ENCODE measurements at regions of chr20 and their contacts with region 1.

Region 1: GRCh38 chr20:63272584-63273579 is at the start of gene ARFGAP1:
- DNase-seq: peak; percentile 73
- H3K4me3 ChIP-seq: peak within 1 kb of the TSS; percentile 91 to 97 (median 93)
- H3K27ac ChIP-seq: peak within 1 kb of the TSS; percentile 74
- H3K4me1 ChIP-seq: peaks cover 28% of the 10 kb centered on the region
- H3K27me3 ChIP-seq: no peaks in the 10 kb centered on the region
- CTCF ChIP-seq: no peak
- total RNA-seq, gene ARFGAP1: 48.5 to 89.8 TPM

Region 2: GRCh38 chr20:63230800-63231268 is 42.0 kb before region 1 on chr20:
- CTCF ChIA-PET with region 1: no interaction called
- dilution Hi-C with region 1: no loop called
- in situ Hi-C with region 1: no loop called
- intact Hi-C with region 1: loop called (anchors 2 kb)
- DNase-seq: peak; percentile 42
- H3K4me3 ChIP-seq: no peak overlapping the region
- H3K27ac ChIP-seq: no peak overlapping the region
- H3K4me1 ChIP-seq: no peaks in the 10 kb centered on the region
- H3K27me3 ChIP-seq: peaks cover 7% of the 10 kb centered on the region
- CTCF ChIP-seq: peak in 1 of 2 donors; percentile 54

Region 3: GRCh38 chr20:63255931-63256704 is 16.8 kb before region 1 on chr20:
- CTCF ChIA-PET with region 1: no interaction called
- dilution Hi-C with region 1: no loop called
- in situ Hi-C with region 1: no loop called
- intact Hi-C with region 1: loop called (anchors 1 kb)
- DNase-seq: peak; percentile 90
- H3K4me3 ChIP-seq: peak overlapping the region in 2 of 3 experiments; percentile 16 to 26
- H3K27ac ChIP-seq: no peak overlapping the region
- H3K4me1 ChIP-seq: peaks cover 27% of the 10 kb centered on the region
- H3K27me3 ChIP-seq: peaks cover 9% of the 10 kb centered on the region
- CTCF ChIP-seq: no peak

Region 4: GRCh38 chr20:63337786-63338420 is 65.0 kb after region 1 on chr20:
- CTCF ChIA-PET with region 1: no interaction called
- dilution Hi-C with region 1: loop called (anchors 5 kb)
- in situ Hi-C with region 1: no loop called
- intact Hi-C with region 1: no loop called
- DNase-seq: no peak
- H3K4me3 ChIP-seq: no peak overlapping the region
- H3K27ac ChIP-seq: no peak overlapping the region
- H3K4me1 ChIP-seq: no peaks in the 10 kb centered on the region
- H3K27me3 ChIP-seq: peaks cover 14% of the 10 kb centered on the region
- CTCF ChIP-seq: no peak

Region 5: GRCh38 chr20:63394069-63394919 is 121.4 kb after region 1 on chr20:
- CTCF ChIA-PET with region 1: no interaction called
- dilution Hi-C with region 1: loop called (anchors 10 kb)
- in situ Hi-C with region 1: no loop called
- intact Hi-C with region 1: no loop called
- DNase-seq: no peak
- H3K4me3 ChIP-seq: no peak overlapping the region
- H3K27ac ChIP-seq: no peak overlapping the region
- H3K4me1 ChIP-seq: no peaks in the 10 kb centered on the region
- H3K27me3 ChIP-seq: peaks cover 4% of the 10 kb centered on the region
- CTCF ChIP-seq: no peak

Measured in mammary epithelial cell (primary cell).